Endothelial cell of umbilical vein (primary cell): ENCODE measurements at regions of chr5 and their contacts with region 1.

Region 1: DNA sequence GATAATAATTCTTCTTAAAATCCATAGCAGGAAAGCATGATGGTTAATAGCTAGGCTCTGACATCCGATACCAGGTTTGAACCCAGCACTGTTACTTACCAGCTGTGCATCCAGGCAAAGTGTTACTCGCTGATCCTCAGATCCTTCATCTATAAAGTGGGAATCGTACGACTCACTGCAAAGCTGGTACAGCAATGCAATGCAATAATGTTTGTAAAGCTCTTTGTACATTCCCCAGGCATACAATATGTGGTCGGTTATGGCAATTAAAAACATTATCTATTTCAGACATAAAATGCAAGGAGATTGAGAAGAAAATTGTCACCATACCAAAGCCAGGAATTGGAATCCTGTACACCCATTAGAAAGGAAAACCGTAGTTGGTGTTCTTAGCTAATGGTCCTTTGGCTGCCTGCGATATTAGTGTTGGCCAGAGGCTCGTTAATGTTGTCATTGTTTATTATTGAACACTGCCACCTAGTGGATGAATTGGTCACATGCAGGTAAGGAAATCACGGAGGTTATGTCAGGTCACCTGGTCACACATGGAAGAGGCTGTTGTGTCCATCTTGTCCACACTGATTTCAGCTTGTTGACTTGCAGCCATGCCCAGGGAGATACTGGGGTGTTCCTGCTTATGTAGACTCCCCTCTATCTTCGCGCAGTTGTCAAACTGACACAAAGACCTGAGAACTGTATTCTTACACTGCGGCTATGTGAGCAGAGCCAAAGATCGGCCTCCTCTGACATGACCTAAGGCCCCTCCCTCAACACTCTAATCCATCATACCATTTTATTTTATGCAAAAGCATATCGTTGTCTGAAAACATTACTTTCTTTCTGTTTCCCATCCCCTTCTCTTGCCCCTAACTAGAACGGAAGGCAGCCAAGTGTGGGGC is 87.5 kb upstream of the PPP2R2B start:
- DNase-seq: peak; percentile 74
- H3K4me3 ChIP-seq: no peak overlapping the region
- H3K27ac ChIP-seq: no peak overlapping the region
- H3K4me1 ChIP-seq: no peaks in the 10 kb centered on the region
- H3K27me3 ChIP-seq: no peaks in the 10 kb centered on the region
- CTCF ChIP-seq: peak; percentile 62 to 71
- POLR2A ChIP-seq: no peak

Region 2: GRCh38 chr5:146528236-146528635 is 437.8 kb before region 1 on chr5:
- CTCF ChIA-PET with region 1: interaction called, 132 read pairs
- POLR2A ChIA-PET with region 1: no interaction called
- dilution Hi-C with region 1: no loop called
- intact Hi-C with region 1: loop called (anchors 1 kb)
- DNase-seq: peak; percentile 29
- H3K4me3 ChIP-seq: no peak overlapping the region
- H3K27ac ChIP-seq: no peak overlapping the region
- H3K4me1 ChIP-seq: no peaks in the 10 kb centered on the region
- H3K27me3 ChIP-seq: peaks cover 7 to 10% of the 10 kb centered on the region in 2 experiments
- CTCF ChIP-seq: peak; percentile 15 to 16
- POLR2A ChIP-seq: no peak

Region 3: DNA sequence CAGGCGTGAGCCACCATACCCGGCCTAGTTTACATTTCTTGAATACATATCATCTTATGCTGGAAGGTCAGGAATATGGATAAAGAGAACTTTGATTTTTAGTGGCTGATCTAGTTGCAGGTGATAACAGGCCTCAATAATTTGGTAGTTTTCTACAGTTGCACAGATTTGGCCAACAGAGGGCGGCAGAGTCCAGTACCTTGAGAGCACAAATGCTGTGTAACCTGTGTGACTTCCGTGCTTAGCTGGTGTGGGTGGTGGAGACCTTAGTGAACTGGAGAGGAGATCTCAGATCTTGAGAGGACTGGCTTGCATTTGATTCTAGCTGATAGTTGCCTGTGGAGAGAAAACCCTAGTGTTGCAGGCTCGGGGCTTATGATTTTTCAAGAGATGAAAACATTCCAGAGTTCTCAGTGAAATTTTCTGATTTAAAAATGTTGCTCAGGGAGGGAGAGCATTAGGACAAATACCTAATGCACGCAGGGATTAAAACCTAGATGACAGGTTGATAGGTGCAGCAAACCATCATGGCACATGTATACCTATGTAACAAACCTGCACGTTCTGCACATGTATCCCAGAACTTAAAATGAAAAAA is 432.7 kb before region 1 on chr5:
- CTCF ChIA-PET with region 1: interaction called, 216 read pairs
- POLR2A ChIA-PET with region 1: no interaction called
- dilution Hi-C with region 1: no loop called
- intact Hi-C with region 1: loop called (anchors 1 kb)
- DNase-seq: peak; percentile 61
- H3K4me3 ChIP-seq: no peak overlapping the region
- H3K27ac ChIP-seq: no peak overlapping the region
- H3K4me1 ChIP-seq: no peaks in the 10 kb centered on the region
- H3K27me3 ChIP-seq: peaks cover 0 to 2% of the 10 kb centered on the region in 2 experiments
- CTCF ChIP-seq: peak; percentile 74 to 77
- POLR2A ChIP-seq: no peak

Region 4: GRCh38 chr5:146541958-146542849 is 423.8 kb before region 1 on chr5:
- CTCF ChIA-PET with region 1: interaction called, 216 read pairs
- POLR2A ChIA-PET with region 1: no interaction called
- dilution Hi-C with region 1: no loop called
- intact Hi-C with region 1: loop called (anchors 1 kb)
- DNase-seq: peak; percentile 66
- H3K4me3 ChIP-seq: no peak overlapping the region
- H3K27ac ChIP-seq: no peak overlapping the region
- H3K4me1 ChIP-seq: no peaks in the 10 kb centered on the region
- H3K27me3 ChIP-seq: peaks cover 0 to 2% of the 10 kb centered on the region in 2 experiments
- CTCF ChIP-seq: peak; percentile 72 to 81
- POLR2A ChIP-seq: no peak

Region 5: GRCh38 chr5:146548781-146549449 is 417.1 kb before region 1 on chr5:
- CTCF ChIA-PET with region 1: interaction called, 216 read pairs
- POLR2A ChIA-PET with region 1: no interaction called
- dilution Hi-C with region 1: no loop called
- intact Hi-C with region 1: no loop called
- DNase-seq: no peak
- H3K4me3 ChIP-seq: no peak overlapping the region
- H3K27ac ChIP-seq: no peak overlapping the region
- H3K4me1 ChIP-seq: no peaks in the 10 kb centered on the region
- H3K27me3 ChIP-seq: no peaks in the 10 kb centered on the region
- CTCF ChIP-seq: no peak
- POLR2A ChIP-seq: no peak

Region 6: GRCh38 chr5:146565764-146566367 is 400.1 kb before region 1 on chr5:
- CTCF ChIA-PET with region 1: interaction called, 70 read pairs
- POLR2A ChIA-PET with region 1: no interaction called
- dilution Hi-C with region 1: no loop called
- intact Hi-C with region 1: loop called (anchors 1 kb)
- DNase-seq: peak; percentile 42
- H3K4me3 ChIP-seq: no peak overlapping the region
- H3K27ac ChIP-seq: no peak overlapping the region
- H3K4me1 ChIP-seq: no peaks in the 10 kb centered on the region
- H3K27me3 ChIP-seq: peaks cover 0 to 3% of the 10 kb centered on the region in 2 experiments
- CTCF ChIP-seq: peak; percentile 45 to 51
- POLR2A ChIP-seq: no peak

Region 7: DNA sequence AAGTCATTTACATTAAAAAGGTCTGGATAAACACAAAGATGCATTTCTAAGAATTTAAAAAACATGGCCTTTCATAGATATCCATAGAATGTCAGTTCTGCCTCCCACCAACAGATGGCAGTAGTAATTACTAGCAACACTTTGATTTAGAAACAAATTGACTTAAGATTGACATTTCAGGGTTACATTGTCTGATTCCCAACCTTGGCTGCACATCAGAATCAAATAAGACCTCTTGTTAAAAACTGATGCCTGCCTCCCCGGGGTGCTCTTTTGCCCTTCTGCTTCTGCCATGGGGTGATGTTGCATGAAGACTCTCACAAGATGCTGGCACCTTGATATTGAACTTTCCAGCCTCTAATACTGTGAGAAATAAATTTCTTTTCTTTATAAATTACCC is 303.8 kb before region 1 on chr5:
- CTCF ChIA-PET with region 1: interaction called, 164 read pairs
- POLR2A ChIA-PET with region 1: no interaction called
- dilution Hi-C with region 1: no loop called
- intact Hi-C with region 1: loop called (anchors 1 kb)
- DNase-seq: peak; percentile 51
- H3K4me3 ChIP-seq: no peak overlapping the region
- H3K27ac ChIP-seq: no peak overlapping the region
- H3K4me1 ChIP-seq: no peaks in the 10 kb centered on the region
- H3K27me3 ChIP-seq: no peaks in the 10 kb centered on the region
- CTCF ChIP-seq: peak; percentile 45 to 48
- POLR2A ChIP-seq: no peak